ENCODE measurements at regions of chr3 and their contacts with region 1.

Region 1: GRCh38 chr3:122564155-122564912 is at the starts of genes DTX3L and PARP9:
- DNase-seq: peak; percentile 64 to 86 (median 74)
- ATAC-seq: peak; percentile 90 to 93
- H3K4me3 Mint-ChIP-seq: peak within 1 kb of the TSS; percentile 86 to 100 (median 96)
- H3K27ac Mint-ChIP-seq: peak within 1 kb of the TSS; percentile 86 to 100 (median 98)
- H3K4me1 Mint-ChIP-seq: peaks cover 39 to 95% (median 84%) of the 10 kb centered on the region in 4 donors
- H3K27me3 Mint-ChIP-seq: no peaks in the 10 kb centered on the region
- polyA plus RNA-seq, gene DTX3L: 20.2 to 27.6 (median 26.3) TPM
- polyA plus RNA-seq, gene PARP9: 18.0 to 30.8 (median 18.6) TPM

Region 2: GRCh38 chr3:122576174-122576940 is 12.0 kb after region 1 on chr3:
- POLR2A ChIA-PET with region 1: interaction called, 29 read pairs
- DNase-seq: peak in 1 of 10 donors; percentile 19
- ATAC-seq: peak in 1 of 2 donors; percentile 34
- H3K4me3 Mint-ChIP-seq: peak overlapping the region in 8 of 10 donors; percentile 16 to 100 (median 99)
- H3K27ac Mint-ChIP-seq: peak overlapping the region in 8 of 10 donors; percentile 5 to 100 (median 96)
- H3K4me1 Mint-ChIP-seq: peaks cover 17 to 77% (median 44%) of the 10 kb centered on the region in 4 donors
- H3K27me3 Mint-ChIP-seq: no peaks in the 10 kb centered on the region

Region 3: GRCh38 chr3:122602011-122602710 is 37.8 kb after region 1 on chr3:
- POLR2A ChIA-PET with region 1: no interaction called
- DNase-seq: no peak
- ATAC-seq: no peak
- H3K4me3 Mint-ChIP-seq: no peak overlapping the region
- H3K27ac Mint-ChIP-seq: peak overlapping the region in 1 of 10 donors; percentile 0
- H3K4me1 Mint-ChIP-seq: peaks cover 4 to 28% (median 10%) of the 10 kb centered on the region in 4 donors
- H3K27me3 Mint-ChIP-seq: no peaks in the 10 kb centered on the region

Region 4: GRCh38 chr3:122679085-122679881 is 114.9 kb after region 1 on chr3:
- POLR2A ChIA-PET with region 1: interaction called, 45 read pairs
- DNase-seq: peak; percentile 65 to 92 (median 81)
- ATAC-seq: peak; percentile 66 to 73
- H3K4me3 Mint-ChIP-seq: peak overlapping the region; percentile 89 to 98 (median 96)
- H3K27ac Mint-ChIP-seq: peak overlapping the region; percentile 96 to 100 (median 98)
- H3K4me1 Mint-ChIP-seq: peaks cover 28 to 62% (median 57%) of the 10 kb centered on the region in 4 donors
- H3K27me3 Mint-ChIP-seq: no peaks in the 10 kb centered on the region